ENCODE measurements at regions of chr2 and their contacts with region 1.

Region 1: DNA sequence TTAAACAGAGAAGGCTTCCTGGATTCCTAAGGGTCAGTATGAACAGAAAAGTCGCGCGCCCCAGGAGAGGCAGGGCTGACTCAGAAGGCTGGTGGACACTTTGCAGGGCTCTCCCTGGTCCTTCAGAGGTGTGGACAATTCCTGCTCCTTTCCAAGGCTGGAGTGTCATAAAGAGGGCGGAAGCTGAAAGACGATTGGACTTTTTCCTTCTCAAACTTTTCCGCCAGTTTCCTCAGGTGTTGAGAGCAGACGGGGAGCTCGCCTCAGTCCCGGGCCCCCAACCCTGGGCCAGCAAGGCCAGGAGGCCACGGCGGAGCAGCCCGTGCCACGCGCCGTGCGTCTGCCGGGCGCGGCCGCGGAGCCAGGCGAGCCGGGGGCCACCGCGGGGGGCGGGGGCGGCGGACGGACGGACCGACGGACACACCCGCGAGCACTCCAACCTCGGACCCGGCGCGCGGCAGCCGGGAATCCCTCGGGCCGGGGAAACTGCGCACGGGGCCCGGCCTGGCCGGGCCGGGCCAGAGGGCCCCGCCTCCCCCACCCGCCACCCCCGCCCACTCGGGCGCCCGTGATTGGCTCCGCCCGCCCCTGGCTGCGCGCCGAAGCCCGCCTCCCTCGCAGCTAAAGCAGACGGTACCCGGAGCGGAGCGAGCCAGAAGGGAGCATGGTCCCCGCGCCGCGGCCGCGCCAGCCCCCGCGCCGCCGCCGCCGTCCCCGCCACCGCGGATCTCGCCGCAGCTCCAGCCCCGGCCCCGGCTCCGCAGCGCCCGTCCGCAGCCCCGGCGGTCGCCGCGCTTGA is at the start of gene KLHL29:
- DNase-seq: peak; percentile 73
- H3K4me3 Mint-ChIP-seq: peak within 1 kb of the TSS; percentile 76
- H3K27ac Mint-ChIP-seq: no peak within 1 kb of the TSS
- H3K4me1 Mint-ChIP-seq: peaks cover 32% of the 10 kb centered on the region
- H3K27me3 Mint-ChIP-seq: peaks cover 38% of the 10 kb centered on the region
- total RNA-seq, gene KLHL29: 2.4 to 2.9 TPM

Region 2: DNA sequence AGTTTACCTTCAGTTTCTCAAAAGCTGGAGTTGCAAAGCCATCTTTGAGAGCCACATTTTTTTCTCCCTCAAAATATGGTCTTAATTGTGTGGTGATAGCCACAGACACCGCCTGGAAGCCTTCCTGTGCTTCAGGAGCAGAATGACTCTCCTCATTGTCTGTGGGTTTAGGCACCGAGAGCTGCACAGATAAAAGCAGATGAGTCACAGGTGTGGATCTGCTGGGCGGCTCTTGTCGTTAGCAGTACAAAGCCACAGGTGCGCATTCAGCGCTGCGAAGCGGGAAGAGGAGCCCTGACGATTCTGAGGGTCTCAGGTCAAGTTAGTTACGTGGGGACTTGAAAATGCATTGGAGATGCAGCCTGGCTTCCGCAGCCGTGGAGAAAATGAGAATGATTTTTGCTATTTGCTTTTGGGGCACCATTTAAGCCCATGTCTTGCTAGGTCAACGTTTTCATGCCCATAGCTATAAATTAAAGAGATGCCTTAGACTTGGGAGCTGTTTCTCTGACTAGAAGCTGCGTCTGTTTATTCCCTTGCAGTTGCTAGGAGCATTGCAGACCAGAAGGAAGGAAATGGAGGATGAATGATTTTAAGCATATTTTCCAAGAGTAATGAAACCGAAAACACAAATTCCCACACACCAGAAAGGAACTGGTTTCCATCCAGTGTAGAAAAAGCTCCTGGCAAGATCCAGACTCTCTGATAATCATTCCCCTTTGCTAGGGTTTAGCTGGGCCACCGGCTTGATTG is 51.8 kb after region 1 on chr2:
- CTCF ChIA-PET with region 1: no interaction called
- intact Hi-C with region 1: loop called (anchors 2 kb)
- DNase-seq: peak; percentile 71
- H3K4me3 Mint-ChIP-seq: no peak overlapping the region
- H3K27ac Mint-ChIP-seq: no peak overlapping the region
- H3K4me1 Mint-ChIP-seq: peaks cover 17% of the 10 kb centered on the region
- H3K27me3 Mint-ChIP-seq: peaks cover 3% of the 10 kb centered on the region

Region 3: DNA sequence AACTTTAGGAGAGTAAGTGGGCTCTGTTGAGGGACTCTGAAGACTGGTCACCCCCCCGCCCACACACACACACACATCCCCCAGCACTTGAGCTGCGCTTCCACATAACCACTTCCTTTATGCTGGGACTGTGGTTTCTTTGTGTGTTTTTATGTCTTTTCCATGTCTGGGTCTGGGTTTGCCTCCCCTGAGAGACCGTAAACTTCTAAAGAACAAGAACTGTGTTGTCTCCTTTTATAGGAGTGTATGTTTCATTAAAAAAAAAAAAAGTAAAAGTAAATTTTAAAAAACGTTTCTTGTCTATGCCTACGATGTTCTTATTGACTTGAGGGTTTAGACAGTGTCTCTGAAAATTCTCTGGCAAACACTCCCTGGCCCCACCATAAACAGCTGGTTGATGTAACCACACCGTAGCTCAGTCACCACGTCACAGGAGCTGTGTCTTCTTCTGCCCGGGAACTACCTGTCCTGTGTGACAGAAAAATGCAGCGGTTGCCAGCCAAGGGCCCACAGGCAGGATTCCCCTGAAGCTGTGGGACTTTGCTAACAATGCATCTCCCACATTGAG is 68.2 kb after region 1 on chr2:
- CTCF ChIA-PET with region 1: no interaction called
- intact Hi-C with region 1: loop called (anchors 2 kb)
- DNase-seq: peak; percentile 69
- H3K4me3 Mint-ChIP-seq: peak overlapping the region; percentile 23
- H3K27ac Mint-ChIP-seq: no peak overlapping the region
- H3K4me1 Mint-ChIP-seq: peaks cover 26% of the 10 kb centered on the region
- H3K27me3 Mint-ChIP-seq: peaks cover 5% of the 10 kb centered on the region

Region 4: DNA sequence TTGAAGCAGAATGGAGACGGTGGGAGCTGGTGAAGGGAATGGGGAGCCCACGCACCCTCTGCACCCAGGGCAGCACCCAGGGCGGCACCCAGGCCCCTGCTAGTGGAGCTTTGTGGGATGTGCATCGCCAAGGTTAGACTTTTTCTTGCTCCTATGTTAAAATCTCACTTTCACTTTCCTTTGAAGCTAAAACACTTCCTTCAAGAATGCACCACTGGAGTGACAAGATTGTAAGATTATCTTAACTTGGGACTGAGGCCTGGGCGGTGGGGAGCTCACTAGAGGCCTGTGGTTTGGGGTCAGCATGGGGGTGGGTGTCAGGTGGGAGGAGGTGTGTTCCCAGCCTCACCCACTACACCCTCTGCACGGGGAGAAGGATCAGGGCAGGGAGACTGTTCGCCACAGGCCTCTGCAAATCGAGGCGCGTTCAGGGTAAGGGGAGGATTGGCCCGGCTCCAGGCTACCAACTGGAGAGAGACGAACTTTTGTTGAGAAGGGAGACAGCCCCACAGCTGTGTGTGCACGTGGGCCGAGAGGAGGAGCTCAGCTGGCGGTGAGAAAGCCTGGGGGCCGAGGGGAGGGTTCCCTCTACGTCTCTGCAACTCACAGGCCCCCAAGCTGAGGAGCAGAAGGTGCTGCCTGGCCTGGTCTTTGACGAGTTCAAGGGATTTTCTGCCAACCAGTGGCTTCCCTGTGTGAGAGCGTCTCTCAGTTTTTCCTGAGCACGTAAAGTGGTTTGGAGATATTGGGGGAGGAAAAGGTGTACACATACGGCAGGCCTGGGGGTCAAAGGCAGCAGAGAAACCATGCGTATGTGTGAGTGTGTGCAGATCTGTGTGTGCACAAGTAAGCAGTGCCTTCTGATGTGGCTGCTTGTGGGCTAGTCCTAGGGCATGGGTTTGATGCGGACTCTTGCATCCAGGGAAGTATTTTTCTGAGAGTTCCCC is 147.9 kb after region 1 on chr2:
- CTCF ChIA-PET with region 1: no interaction called
- intact Hi-C with region 1: loop called (anchors 2 kb)
- DNase-seq: peak; percentile 68
- H3K4me3 Mint-ChIP-seq: peak overlapping the region; percentile 95
- H3K27ac Mint-ChIP-seq: peak overlapping the region; percentile 89
- H3K4me1 Mint-ChIP-seq: peaks cover 40% of the 10 kb centered on the region
- H3K27me3 Mint-ChIP-seq: no peaks in the 10 kb centered on the region

Measured in activated naive CD4-positive, alpha-beta T cell treated with anti-CD3 and anti-CD28 coated beads for 36 hours (primary cell).